SK-N-SH (cell line): ENCODE measurements at regions of chr1 and their contacts with region 1.

Region 1: GRCh38 chr1:206912445-206913095 is 9.2 kb downstream of the FCMR start:
- DNase-seq: peak; percentile 81
- H3K4me3 ChIP-seq: no peak overlapping the region; a peak in 1 of 4 replicates
- H3K27ac ChIP-seq: no peak overlapping the region
- H3K4me1 ChIP-seq: peaks cover 0 to 10% of the 10 kb centered on the region in 2 experiments; a peak in 1 of 4 replicates
- H3K27me3 ChIP-seq: peaks cover 43% of the 10 kb centered on the region
- CTCF ChIP-seq: peak; percentile 81
- EP300 ChIP-seq: no peak
- RAD21 ChIP-seq: peak; percentile 92

Region 2: DNA sequence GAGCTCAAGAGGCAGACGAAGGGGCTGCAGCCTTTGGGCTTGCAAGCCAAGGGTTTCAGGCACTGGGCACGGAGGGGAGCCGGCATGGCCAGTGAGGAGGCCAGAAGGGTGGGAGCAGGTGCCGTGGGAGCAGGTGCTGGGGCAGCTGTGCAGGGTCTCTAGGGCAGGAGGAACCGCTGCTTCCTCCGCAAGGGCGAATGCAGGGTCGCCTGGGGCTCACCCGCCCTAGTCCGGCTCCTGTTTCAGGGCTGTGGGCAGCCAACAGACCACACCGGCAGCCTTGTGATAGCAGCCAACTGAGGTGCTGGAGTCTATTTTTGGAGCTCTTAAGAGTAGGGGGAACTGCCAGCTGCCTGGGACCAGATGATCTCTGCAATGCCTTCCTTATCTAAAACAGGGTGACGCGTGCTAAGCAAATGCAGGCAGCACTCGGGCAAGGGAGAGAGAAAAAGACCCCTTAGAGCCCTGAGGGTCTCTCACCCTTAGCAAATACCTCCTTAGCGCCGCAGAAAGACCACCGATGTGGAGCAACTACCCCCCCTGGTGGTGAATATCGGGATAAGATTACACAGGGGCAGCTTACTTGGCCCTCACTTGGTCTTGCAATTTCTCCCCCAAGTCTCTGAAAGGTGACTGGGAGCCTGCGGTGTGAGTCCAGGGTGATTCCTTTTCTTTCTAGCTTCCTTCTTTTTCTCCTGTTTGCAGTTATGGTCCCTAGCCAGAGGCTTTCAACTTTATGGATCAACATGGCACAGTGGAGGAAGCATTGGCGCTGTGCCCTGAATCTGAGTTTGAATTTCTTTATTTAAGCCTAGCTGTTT is 248.5 kb before region 1 on chr1:
- CTCF ChIA-PET with region 1: interaction called, 26 read pairs
- POLR2A ChIA-PET with region 1: no interaction called
- DNase-seq: peak; percentile 84
- H3K4me3 ChIP-seq: peak overlapping the region; percentile 8 to 39; a peak in 2 of 4 replicates
- H3K27ac ChIP-seq: no peak overlapping the region
- H3K4me1 ChIP-seq: peaks cover 0 to 6% of the 10 kb centered on the region in 2 experiments; a peak in 1 of 4 replicates
- H3K27me3 ChIP-seq: peaks cover 23% of the 10 kb centered on the region; the same call in 1 of the 2 replicates
- CTCF ChIP-seq: peak; percentile 89
- EP300 ChIP-seq: no peak
- RAD21 ChIP-seq: peak; percentile 89

Region 3: DNA sequence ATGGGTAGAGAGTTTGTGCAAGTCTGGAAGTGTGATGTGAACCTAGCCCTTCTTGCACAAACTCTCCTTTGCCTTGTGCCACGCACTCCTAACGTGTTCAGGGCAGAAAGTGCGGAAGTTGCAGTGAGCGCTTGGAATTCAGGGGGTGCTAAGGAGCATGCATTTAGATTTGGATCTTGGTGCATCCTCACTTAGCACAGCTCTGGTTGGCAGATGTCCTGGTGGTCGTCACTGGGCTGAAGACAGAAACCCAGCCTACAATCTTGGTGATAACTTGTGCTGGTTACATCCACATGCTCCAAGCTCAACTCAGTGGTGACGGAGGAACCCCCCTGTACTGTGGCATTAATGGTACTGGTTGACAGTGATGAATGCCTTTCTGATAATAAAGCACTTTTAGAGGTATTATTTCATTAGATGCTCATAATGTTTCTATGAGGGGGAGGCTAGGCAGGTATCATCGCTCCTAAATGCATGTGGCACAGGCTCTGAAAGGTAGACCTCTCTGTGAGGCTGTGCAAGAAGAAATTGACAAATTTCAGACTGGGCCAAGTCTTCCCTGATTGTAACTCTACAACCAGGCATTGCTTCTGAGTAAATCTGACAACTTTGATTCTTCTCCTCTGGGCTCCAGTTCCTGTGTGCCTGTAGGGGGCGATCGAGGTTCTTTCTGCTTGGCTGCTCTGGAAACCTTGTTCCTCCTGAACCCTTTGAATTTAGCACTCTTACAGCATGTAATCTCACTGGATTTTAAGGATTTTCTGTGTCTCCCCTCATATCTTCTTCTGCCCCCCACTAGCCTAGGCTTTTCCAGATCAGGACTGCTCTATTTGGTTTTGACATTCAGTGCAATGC is 187.2 kb before region 1 on chr1:
- CTCF ChIA-PET with region 1: interaction called, 380 read pairs
- POLR2A ChIA-PET with region 1: no interaction called
- DNase-seq: peak; percentile 67
- H3K4me3 ChIP-seq: no peak overlapping the region; a peak in 1 of 4 replicates
- H3K27ac ChIP-seq: no peak overlapping the region
- H3K4me1 ChIP-seq: peaks cover 0 to 10% of the 10 kb centered on the region in 2 experiments; a peak in 1 of 4 replicates
- H3K27me3 ChIP-seq: no peaks in the 10 kb centered on the region
- CTCF ChIP-seq: peak; percentile 65
- EP300 ChIP-seq: no peak
- RAD21 ChIP-seq: peak; percentile 52

Region 4: GRCh38 chr1:206766251-206766856 is 146.2 kb before region 1 on chr1:
- CTCF ChIA-PET with region 1: interaction called, 21 read pairs
- POLR2A ChIA-PET with region 1: no interaction called
- DNase-seq: no peak
- H3K4me3 ChIP-seq: no peak overlapping the region
- H3K27ac ChIP-seq: no peak overlapping the region
- H3K4me1 ChIP-seq: peaks cover 0 to under 1% of the 10 kb centered on the region in 2 experiments; a peak in 2 of 4 replicates
- H3K27me3 ChIP-seq: peaks cover 10% of the 10 kb centered on the region; the same call in 1 of the 2 replicates
- CTCF ChIP-seq: no peak
- EP300 ChIP-seq: no peak
- RAD21 ChIP-seq: no peak

Region 5: GRCh38 chr1:206865013-206865671 is 47.4 kb before region 1 on chr1 and contains the start of gene IL20:
- CTCF ChIA-PET with region 1: interaction called, 16 read pairs
- POLR2A ChIA-PET with region 1: no interaction called
- DNase-seq: peak; percentile 52
- H3K4me3 ChIP-seq: no peak within 1 kb of the TSS
- H3K27ac ChIP-seq: no peak within 1 kb of the TSS
- H3K4me1 ChIP-seq: no peaks in the 10 kb centered on the region; a peak in 1 of 4 replicates
- H3K27me3 ChIP-seq: peaks cover 5% of the 10 kb centered on the region; the same call in 1 of the 2 replicates
- CTCF ChIP-seq: peak; percentile 77
- EP300 ChIP-seq: no peak
- RAD21 ChIP-seq: peak; percentile 53
- polyA plus RNA-seq, gene IL20: not detected in 2 replicates

Region 6: GRCh38 chr1:206935491-206936067 is 23.0 kb after region 1 on chr1:
- CTCF ChIA-PET with region 1: interaction called, 23 read pairs
- POLR2A ChIA-PET with region 1: no interaction called
- DNase-seq: peak; percentile 59
- H3K4me3 ChIP-seq: no peak overlapping the region
- H3K27ac ChIP-seq: no peak overlapping the region
- H3K4me1 ChIP-seq: no peaks in the 10 kb centered on the region
- H3K27me3 ChIP-seq: peaks cover 4% of the 10 kb centered on the region; the same call in 1 of the 2 replicates
- CTCF ChIP-seq: peak; percentile 40
- EP300 ChIP-seq: no peak
- RAD21 ChIP-seq: no peak